Heart right ventricle (tissue), 16 donors: ENCODE measurements at regions of chr12 and their contacts with region 1.

Region 1: DNA sequence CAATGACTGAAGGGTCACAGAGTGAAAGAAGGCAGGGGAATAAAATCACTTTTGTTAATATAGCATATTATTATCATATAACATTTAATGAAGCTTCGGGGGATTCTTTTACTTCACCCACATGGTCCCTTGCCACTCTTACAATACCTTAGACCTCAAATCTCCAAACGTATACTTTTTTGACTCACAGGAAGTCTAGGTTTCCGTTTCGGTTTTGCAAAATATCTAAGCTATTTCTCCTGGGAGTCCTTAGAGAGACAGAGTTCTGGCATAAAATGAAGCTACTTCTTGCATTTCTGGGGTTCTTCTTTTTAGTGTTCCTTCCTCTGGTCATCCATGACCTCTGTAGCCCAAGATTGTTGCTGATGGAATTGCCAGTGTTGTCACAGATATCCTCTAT is 590.5 kb upstream of the ATP2B1 start:
- DNase-seq: no peak
- ATAC-seq: no peak
- H3K4me3 ChIP-seq: peak overlapping the region in 3 of 10 donors; percentile 4 to 20 (median 19)
- H3K27ac ChIP-seq: peak overlapping the region in 5 of 10 donors; percentile 2 to 50 (median 41)
- H3K4me1 ChIP-seq: peaks cover 0 to 17% (median 0%) of the 10 kb centered on the region in 9 donors
- H3K27me3 ChIP-seq: no peaks in the 10 kb centered on the region
- CTCF ChIP-seq: no peak

Region 2: DNA sequence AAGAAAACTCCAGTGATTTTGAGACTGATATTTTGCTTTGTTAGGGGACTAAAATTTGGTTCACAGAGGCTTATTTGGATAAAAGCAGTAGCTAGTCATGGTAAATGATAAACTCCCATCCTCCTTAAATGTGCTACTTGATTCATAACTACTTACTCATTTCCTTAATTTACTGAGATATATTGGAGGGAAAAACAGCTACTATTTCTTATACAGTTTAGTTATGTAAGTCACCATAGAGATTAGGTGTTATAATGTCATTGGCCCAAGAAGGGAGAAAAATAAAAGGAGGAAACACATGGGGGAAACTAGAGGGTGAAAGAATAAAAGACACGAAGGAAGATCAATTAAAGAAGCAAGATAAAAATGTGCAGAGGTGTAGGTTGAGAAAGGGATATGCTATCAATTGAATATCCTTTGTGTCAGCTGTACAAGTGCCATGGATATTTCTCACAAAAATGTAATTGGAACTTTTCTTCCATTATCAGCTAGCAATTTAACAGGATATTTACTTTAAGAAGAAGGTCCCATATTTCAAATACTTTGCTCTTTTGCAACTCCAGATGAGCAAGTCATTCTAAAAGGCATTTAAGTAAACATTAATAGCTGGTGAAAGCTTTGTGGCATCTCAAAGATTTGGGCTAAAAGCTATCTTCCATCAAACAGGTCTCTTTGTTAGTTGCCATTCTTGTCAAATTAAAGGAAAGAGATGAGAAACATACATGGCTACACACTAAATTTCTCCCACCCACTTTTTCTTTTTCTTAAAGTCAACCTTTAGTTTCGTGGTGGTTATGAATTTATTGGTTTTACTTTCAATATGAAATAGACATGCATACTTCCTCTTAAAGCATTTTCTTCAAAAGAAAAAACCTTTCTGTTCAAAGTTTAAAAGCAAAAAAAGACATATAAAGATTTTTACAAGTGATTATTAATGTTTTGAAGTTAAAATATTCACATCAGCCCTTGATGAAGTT is 216.4 kb after region 1 on chr12:
- intact Hi-C with region 1: loop called in 1 of 10 experiments (anchors 10 kb)
- DNase-seq: no peak
- ATAC-seq: no peak
- H3K4me3 ChIP-seq: no peak overlapping the region
- H3K27ac ChIP-seq: no peak overlapping the region
- H3K4me1 ChIP-seq: peaks cover 0 to 30% (median 15%) of the 10 kb centered on the region in 9 donors
- H3K27me3 ChIP-seq: no peaks in the 10 kb centered on the region
- CTCF ChIP-seq: no peak